ENCODE measurements at regions of chr1 and their contacts with region 1.

Region 1: DNA sequence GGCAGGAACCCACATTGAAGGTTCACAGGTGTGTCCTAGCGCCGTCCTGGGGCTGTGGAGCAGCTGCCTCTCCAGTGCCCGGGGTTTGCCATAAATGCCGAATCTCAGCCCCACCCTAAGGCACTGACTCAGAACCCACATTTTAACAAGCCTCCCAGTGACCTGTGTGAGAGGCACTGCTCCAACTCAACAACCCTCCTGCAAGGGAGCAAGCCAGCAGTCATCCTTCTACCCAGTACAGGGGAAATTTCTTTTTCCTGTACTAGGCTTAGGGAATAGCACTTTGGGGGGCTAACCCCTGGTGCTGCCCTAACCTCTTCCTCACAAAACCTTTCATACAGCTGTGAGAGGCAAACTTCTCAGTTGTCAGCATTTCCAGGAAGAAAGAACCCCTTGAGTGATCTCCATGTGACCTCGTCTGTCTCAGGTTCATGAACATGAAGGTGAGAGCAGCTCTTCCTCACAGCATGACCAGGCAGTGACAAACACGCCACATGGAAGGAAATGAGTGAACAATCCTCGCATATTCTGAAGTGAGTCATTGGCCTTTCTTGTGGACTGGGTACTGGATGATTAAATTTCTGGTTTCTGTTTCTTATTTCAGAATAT is 11.4 kb upstream of the BCAR3 start:
- DNase-seq: peak; percentile 89
- ATAC-seq: peak; percentile 77
- H3K4me3 ChIP-seq: peak overlapping the region; percentile 7 to 45
- H3K27ac ChIP-seq: peak overlapping the region; percentile 80
- H3K4me1 ChIP-seq: peaks cover 39 to 83% of the 10 kb centered on the region in 2 experiments
- H3K27me3 ChIP-seq: no peaks in the 10 kb centered on the region
- CTCF ChIP-seq: no peak
- POLR2A ChIP-seq: no peak
- RAD21 ChIP-seq: no peak

Region 2: DNA sequence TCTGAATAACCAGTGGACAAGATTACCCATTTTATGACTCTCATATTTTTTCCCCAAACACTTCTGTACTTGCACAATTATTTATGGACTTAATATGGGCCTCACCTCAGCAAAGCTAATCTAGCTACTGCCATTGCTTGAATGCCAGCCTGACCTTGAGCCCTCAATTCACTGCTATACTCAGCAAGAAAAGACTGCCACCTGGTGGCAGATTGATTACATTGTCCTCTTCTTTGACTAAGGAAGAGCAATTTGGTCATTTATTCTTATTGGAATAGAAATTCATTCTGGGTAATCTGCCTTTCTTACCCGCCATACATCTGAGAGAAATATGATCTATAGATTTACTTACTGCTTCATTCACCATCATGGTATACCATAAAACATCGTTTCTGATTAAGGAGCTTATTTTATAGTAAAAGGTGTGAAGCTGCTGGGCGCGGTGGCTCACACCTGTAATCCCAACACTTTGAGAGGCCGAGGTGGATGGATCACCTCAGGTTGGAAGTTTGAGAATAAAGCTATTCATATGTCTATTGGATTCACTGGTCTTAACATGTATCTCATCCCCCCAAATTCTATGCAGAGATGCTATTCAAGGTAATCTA is 698.9 kb before region 1 on chr1:
- CTCF ChIA-PET with region 1: no interaction called
- POLR2A ChIA-PET with region 1: no interaction called
- RAD21 ChIA-PET with region 1: no interaction called
- intact Hi-C with region 1: no loop called
- DNase-seq: peak; percentile 75
- ATAC-seq: peak; percentile 92
- H3K4me3 ChIP-seq: no peak overlapping the region
- H3K27ac ChIP-seq: no peak overlapping the region
- H3K4me1 ChIP-seq: 0 out of 4 replicates have a peak, but pooled peaks cover 0 to 4% of the 10 kb centered on the region in 2 experiments
- H3K27me3 ChIP-seq: no peaks in the 10 kb centered on the region
- CTCF ChIP-seq: peak; percentile 66 to 97 (median 91)
- POLR2A ChIP-seq: no peak
- RAD21 ChIP-seq: peak; percentile 92

Region 3: GRCh38 chr1:93680757-93681550 is 12.1 kb before region 1 on chr1:
- CTCF ChIA-PET with region 1: interaction called, 3 read pairs
- POLR2A ChIA-PET with region 1: interaction called, 10 read pairs
- RAD21 ChIA-PET with region 1: no interaction called
- intact Hi-C with region 1: no loop called
- DNase-seq: peak; percentile 76
- ATAC-seq: peak; percentile 87
- H3K4me3 ChIP-seq: peak overlapping the region; percentile 67 to 77
- H3K27ac ChIP-seq: peak overlapping the region; percentile 70
- H3K4me1 ChIP-seq: peaks cover 0 to 53% of the 10 kb centered on the region in 2 experiments; a peak in 2 of 4 replicates
- H3K27me3 ChIP-seq: no peaks in the 10 kb centered on the region
- CTCF ChIP-seq: peak in 2 of 3 experiments; percentile 58 to 66; a peak in 4 of 6 replicates
- POLR2A ChIP-seq: no peak
- RAD21 ChIP-seq: peak; percentile 59

Region 4: DNA sequence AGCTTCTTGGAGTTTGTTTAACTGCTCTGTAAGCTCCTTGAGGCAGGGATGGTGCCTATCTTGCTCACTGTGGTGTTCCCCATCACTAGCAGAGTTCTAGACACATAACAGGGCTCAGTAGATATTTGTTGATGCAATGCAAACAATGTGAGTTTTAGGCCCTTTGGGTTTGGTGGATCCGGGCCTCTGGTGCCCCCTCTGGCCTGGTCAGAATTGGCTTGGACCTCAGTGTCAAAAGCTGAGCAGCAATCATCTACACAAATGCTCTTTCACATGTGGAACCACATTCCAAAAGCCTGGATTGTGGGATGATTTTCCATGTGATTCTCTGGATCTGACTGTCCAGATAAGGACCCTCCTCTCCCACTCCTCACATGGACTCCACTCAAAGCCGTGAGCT is 41.9 kb after region 1 on chr1:
- CTCF ChIA-PET with region 1: no interaction called
- POLR2A ChIA-PET with region 1: no interaction called
- RAD21 ChIA-PET with region 1: no interaction called
- intact Hi-C with region 1: loop called (anchors 2 kb)
- DNase-seq: no peak
- ATAC-seq: no peak
- H3K4me3 ChIP-seq: no peak overlapping the region
- H3K27ac ChIP-seq: no peak overlapping the region
- H3K4me1 ChIP-seq: peaks cover 19 to 80% of the 10 kb centered on the region in 2 experiments
- H3K27me3 ChIP-seq: no peaks in the 10 kb centered on the region
- CTCF ChIP-seq: peak in 2 of 3 experiments; percentile 54 to 60; a peak in 4 of 6 replicates
- POLR2A ChIP-seq: no peak
- RAD21 ChIP-seq: peak; percentile 38